ENCODE measurements at regions of chr6 and their contacts with region 1.

Region 1: GRCh38 chr6:29813809-29814208 is 13.8 kb upstream of the HLA-G start:
- DNase-seq: no peak
- H3K4me3 ChIP-seq: no peak overlapping the region
- H3K27ac ChIP-seq: no peak overlapping the region
- H3K4me1 ChIP-seq: no peaks in the 10 kb centered on the region
- H3K27me3 ChIP-seq: no peaks in the 10 kb centered on the region
- CTCF ChIP-seq: no peak
- POLR2A ChIP-seq: no peak

Region 2: DNA sequence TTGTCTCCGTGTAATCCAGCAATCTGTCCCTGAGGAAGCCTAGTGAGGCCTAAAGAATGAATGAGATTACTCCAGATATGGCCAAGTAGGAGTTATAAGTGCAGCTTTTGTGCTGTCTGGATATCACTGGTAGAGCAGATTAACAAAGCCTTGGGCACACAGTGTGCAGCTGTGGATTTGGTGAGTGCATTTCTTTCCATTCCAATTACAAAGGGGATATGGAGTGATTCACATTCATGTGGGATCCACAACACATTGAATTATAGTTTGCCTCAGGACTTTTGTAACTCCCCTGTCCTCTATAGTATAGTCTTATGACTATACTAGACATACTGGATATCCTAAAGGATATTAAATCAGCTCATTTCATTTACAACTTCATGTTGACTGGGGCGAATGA is 43.5 kb before region 1 on chr6:
- intact Hi-C with region 1: loop called (anchors 2 kb)
- DNase-seq: no peak
- H3K4me3 ChIP-seq: no peak overlapping the region
- H3K27ac ChIP-seq: no peak overlapping the region
- H3K4me1 ChIP-seq: no peaks in the 10 kb centered on the region
- H3K27me3 ChIP-seq: no peaks in the 10 kb centered on the region
- CTCF ChIP-seq: no peak
- POLR2A ChIP-seq: no peak

Region 3: GRCh38 chr6:30844091-30844535 is 1030.3 kb after region 1 on chr6:
- intact Hi-C with region 1: no loop called
- DNase-seq: peak in 1 of 2 donors; percentile 68
- H3K4me3 ChIP-seq: no peak overlapping the region
- H3K27ac ChIP-seq: peak overlapping the region; percentile 51 to 74
- H3K4me1 ChIP-seq: peaks cover 0 to 3% of the 10 kb centered on the region in 2 donors
- H3K27me3 ChIP-seq: no peaks in the 10 kb centered on the region
- CTCF ChIP-seq: no peak
- POLR2A ChIP-seq: no peak

Measured in breast epithelium (tissue), 4 donors.